Endothelial cell of umbilical vein (primary cell): ENCODE measurements at regions of chr2 and their contacts with region 1.

Region 1: GRCh38 chr2:62705007-62705829 is at the start of gene EHBP1:
- DNase-seq: peak; percentile 100
- H3K4me3 ChIP-seq: peak within 1 kb of the TSS; percentile 84 to 87 (median 85)
- H3K27ac ChIP-seq: peak within 1 kb of the TSS; percentile 29
- H3K4me1 ChIP-seq: peaks cover 17% of the 10 kb centered on the region
- H3K27me3 ChIP-seq: no peaks in the 10 kb centered on the region
- CTCF ChIP-seq: no peak
- POLR2A ChIP-seq: peak; percentile 69
- total RNA-seq, gene EHBP1: 31.6 and 34.8 TPM in 2 replicates

Region 2: GRCh38 chr2:61905372-61906185 is 799.6 kb before region 1 on chr2 and contains the start of gene COMMD1:
- CTCF ChIA-PET with region 1: no interaction called
- POLR2A ChIA-PET with region 1: no interaction called
- dilution Hi-C with region 1: no loop called
- intact Hi-C with region 1: loop called (anchors 10 kb)
- DNase-seq: peak; percentile 82
- H3K4me3 ChIP-seq: peak within 1 kb of the TSS; percentile 56 to 91 (median 66)
- H3K27ac ChIP-seq: peak within 1 kb of the TSS; percentile 8
- H3K4me1 ChIP-seq: peaks cover 9% of the 10 kb centered on the region
- H3K27me3 ChIP-seq: no peaks in the 10 kb centered on the region
- CTCF ChIP-seq: no peak
- POLR2A ChIP-seq: peak; percentile 96
- total RNA-seq, gene COMMD1: 39.5 and 42.0 TPM in 2 replicates

Region 3: DNA sequence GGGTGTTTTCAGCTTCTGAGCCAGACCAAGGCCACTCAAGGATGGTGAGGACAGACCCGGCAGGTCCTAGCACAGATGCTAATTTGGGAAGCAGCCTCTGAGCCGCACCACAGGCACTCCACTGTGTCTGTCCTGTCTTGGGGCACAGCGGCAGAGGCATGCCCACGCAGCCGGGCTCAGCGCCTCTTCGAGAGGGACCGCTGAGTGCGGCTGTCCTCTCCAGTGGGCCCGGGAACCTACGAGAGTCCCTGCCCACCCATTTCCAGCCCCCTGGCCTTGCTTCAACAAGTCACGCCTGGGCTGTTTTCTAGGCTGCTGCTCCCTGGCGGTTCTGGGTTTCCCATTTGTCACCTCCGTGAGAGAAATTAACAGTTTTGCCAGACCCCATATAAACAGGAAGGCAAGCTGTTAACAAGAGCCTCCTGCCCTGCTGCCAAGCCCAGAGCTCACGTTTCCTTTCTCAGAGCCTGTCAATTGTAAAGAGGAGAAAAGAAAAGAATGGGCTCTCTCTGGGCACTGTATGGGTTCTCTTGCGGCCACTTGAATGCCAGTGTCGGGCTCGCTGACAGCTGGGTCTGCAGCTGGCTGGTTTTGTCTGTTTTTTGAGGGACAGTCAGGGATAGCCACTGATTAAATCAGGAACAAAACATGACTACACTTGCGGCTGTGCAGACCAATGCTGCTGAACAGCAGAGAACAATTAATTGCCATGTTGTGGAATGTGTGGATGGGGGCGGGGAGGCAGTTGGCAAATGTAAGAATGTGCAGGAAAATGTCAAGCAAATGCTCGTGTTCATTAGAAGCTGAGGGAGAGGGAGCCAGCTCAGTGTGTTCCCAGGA is 229.8 kb before region 1 on chr2:
- CTCF ChIA-PET with region 1: no interaction called
- POLR2A ChIA-PET with region 1: interaction called, 3 read pairs
- dilution Hi-C with region 1: no loop called
- intact Hi-C with region 1: loop called (anchors 1 kb)
- DNase-seq: peak; percentile 95
- H3K4me3 ChIP-seq: peak overlapping the region in 1 of 3 experiments; percentile 24
- H3K27ac ChIP-seq: peak overlapping the region; percentile 8
- H3K4me1 ChIP-seq: peaks cover 28% of the 10 kb centered on the region
- H3K27me3 ChIP-seq: no peaks in the 10 kb centered on the region
- CTCF ChIP-seq: no peak
- POLR2A ChIP-seq: no peak

Region 4: DNA sequence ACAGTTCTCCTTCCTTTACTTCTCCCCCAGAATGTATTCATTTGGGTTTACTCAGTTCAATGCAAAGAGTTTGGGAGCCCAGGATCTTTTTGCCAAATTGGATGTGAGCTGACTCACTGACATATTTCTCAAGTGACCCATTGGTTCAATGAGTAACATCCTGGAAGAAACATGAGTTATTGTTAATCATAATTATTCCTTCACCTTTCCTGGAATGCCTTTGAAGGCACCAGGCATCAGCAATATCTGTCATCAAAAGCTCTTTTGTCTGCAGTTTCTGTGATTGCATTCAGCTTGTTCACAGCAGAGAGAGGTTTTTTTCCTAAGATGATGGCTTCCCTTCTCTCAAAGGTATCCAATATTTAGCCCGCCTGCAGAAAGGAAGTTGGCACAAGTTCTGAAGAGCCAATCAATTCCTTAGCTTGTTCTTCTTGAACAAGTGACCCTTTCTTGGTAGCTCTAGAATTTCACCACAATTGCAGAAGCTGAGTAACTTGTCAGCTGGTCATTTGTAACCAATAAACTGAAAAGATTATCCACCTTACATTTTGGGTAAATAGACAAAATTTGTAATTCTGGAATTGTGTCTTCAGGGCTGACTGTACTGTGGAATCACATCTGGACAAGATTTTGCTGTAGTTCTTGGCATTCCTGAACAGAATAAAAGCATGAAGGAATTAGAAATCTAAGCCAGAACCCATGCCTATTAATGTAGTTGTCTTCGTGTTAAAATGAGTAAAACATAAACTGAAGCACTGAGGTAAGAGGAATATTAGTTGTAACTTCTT is 127.0 kb before region 1 on chr2:
- CTCF ChIA-PET with region 1: interaction called, 4 read pairs
- POLR2A ChIA-PET with region 1: no interaction called
- dilution Hi-C with region 1: no loop called
- intact Hi-C with region 1: loop called (anchors 1 kb)
- DNase-seq: peak; percentile 80
- H3K4me3 ChIP-seq: no peak overlapping the region
- H3K27ac ChIP-seq: peak overlapping the region; percentile 85
- H3K4me1 ChIP-seq: peaks cover 24% of the 10 kb centered on the region
- H3K27me3 ChIP-seq: no peaks in the 10 kb centered on the region
- CTCF ChIP-seq: no peak
- POLR2A ChIP-seq: no peak

Region 5: GRCh38 chr2:63023444-63023843 is 318.2 kb after region 1 on chr2:
- CTCF ChIA-PET with region 1: no interaction called
- POLR2A ChIA-PET with region 1: no interaction called
- dilution Hi-C with region 1: no loop called
- intact Hi-C with region 1: loop called (anchors 5 kb)
- DNase-seq: peak; percentile 67
- H3K4me3 ChIP-seq: no peak overlapping the region
- H3K27ac ChIP-seq: no peak overlapping the region
- H3K4me1 ChIP-seq: peaks cover 3% of the 10 kb centered on the region
- H3K27me3 ChIP-seq: no peaks in the 10 kb centered on the region
- CTCF ChIP-seq: peak; percentile 42 to 43
- POLR2A ChIP-seq: no peak